ENCODE measurements at regions of chr15 and their contacts with region 1.

Region 1: GRCh38 chr15:33086507-33087121 is 107.9 kb downstream of the FMN1 start:
- ATAC-seq: peak in 4 of 8 experiments; percentile 48 to 66 (median 57)
- H3K4me3 ChIP-seq: no peak overlapping the region
- H3K27ac ChIP-seq: no peak overlapping the region
- H3K4me1 ChIP-seq: peaks cover 15 to 18% of the 10 kb centered on the region in 2 donors

Region 2: GRCh38 chr15:33021806-33022389 is 64.7 kb before region 1 on chr15:
- in situ Hi-C with region 1: loop called in 1 of 9 experiments (anchors 10 kb)
- ATAC-seq: peak in 4 of 8 experiments; percentile 53 to 80 (median 67)
- H3K4me3 ChIP-seq: no peak overlapping the region
- H3K27ac ChIP-seq: no peak overlapping the region
- H3K4me1 ChIP-seq: no peaks in the 10 kb centered on the region

Region 3: GRCh38 chr15:33201491-33202231 is 115.0 kb after region 1 on chr15:
- in situ Hi-C with region 1: loop called in 1 of 9 experiments (anchors 25 kb)
- ATAC-seq: peak; percentile 68 to 98 (median 92)
- H3K4me3 ChIP-seq: no peak overlapping the region
- H3K27ac ChIP-seq: no peak overlapping the region
- H3K4me1 ChIP-seq: peaks cover 4 to 6% of the 10 kb centered on the region in 2 donors

Region 4: GRCh38 chr15:33256874-33257273 is 170.3 kb after region 1 on chr15:
- in situ Hi-C with region 1: no loop called
- ATAC-seq: no peak
- H3K4me3 ChIP-seq: no peak overlapping the region
- H3K27ac ChIP-seq: no peak overlapping the region
- H3K4me1 ChIP-seq: no peaks in the 10 kb centered on the region

Region 5: DNA sequence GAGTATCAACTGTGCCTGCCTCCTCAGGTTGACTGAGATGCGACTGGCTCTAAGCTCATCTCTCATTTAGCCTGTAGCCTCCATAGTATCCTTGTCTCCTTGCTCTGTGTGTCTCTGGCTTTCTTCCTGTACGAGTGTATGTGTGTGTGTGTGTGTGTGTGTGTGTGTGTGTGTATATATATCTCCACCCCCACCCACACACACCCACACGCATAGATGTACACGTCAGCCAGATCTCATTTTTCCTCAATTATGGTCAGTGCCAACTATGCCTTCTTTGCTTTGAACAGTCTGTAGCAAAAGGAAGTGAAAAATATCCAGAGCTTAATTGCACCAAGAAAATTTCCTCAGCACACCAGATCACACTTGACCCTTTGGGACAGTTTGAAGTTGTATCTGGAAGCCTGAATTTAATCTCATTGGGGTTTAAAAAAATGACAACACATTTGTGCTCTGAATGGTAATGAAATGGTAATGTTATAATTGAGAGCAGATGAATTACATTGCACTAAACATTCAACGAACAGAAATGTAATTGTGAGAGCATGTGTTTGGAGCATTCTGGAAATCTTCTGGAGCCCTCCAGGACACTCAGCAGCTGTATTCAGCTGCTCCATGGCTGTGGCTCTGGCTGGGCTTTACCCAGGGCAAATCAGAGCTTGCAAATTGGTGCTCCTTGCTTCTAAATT is 287.8 kb after region 1 on chr15:
- in situ Hi-C with region 1: no loop called
- ATAC-seq: peak in 5 of 8 experiments; percentile 38 to 66 (median 61)
- H3K4me3 ChIP-seq: no peak overlapping the region
- H3K27ac ChIP-seq: no peak overlapping the region
- H3K4me1 ChIP-seq: no peaks in the 10 kb centered on the region

Region 6: DNA sequence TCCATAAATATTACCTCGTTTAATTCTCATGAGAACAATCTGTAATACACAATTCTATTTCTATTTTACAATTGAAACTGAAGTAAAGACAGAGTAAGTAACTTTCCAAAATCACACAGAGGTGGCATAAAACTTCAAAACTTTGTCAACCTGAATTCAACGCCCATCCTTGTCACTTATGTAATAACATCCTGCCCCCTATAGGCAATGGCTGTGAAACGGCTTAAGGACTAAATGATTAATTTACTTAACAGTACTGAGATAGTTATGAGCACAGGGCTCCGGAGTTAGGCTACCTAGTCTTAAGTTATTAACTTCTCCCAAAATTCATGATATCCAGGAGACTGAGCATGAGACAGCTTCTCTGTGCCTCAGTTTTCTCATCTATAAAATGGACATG is 588.6 kb after region 1 on chr15:
- in situ Hi-C with region 1: loop called in 1 of 9 experiments (anchors 25 kb)
- ATAC-seq: peak in 3 of 8 experiments; percentile 46 to 66 (median 47)
- H3K4me3 ChIP-seq: no peak overlapping the region
- H3K27ac ChIP-seq: no peak overlapping the region
- H3K4me1 ChIP-seq: peaks cover 14 to 15% of the 10 kb centered on the region in 2 donors

Measured in motor neuron (in vitro differentiated cells).